ENCODE measurements at regions of chr1 and their contacts with region 1.

Region 1: GRCh38 chr1:9350013-9350908 is 57.6 kb downstream of the SPSB1 start:
- DNase-seq: no peak
- H3K4me3 ChIP-seq: no peak overlapping the region
- H3K27ac ChIP-seq: no peak overlapping the region
- H3K4me1 ChIP-seq: peaks cover 20% of the 10 kb centered on the region
- H3K27me3 ChIP-seq: no peaks in the 10 kb centered on the region
- CTCF ChIP-seq: no peak

Region 2: GRCh38 chr1:9150582-9151327 is 199.5 kb before region 1 on chr1:
- CTCF ChIA-PET with region 1: no interaction called
- dilution Hi-C with region 1: no loop called
- in situ Hi-C with region 1: no loop called
- intact Hi-C with region 1: no loop called
- DNase-seq: no peak
- H3K4me3 ChIP-seq: no peak overlapping the region
- H3K27ac ChIP-seq: no peak overlapping the region
- H3K4me1 ChIP-seq: no peaks in the 10 kb centered on the region
- H3K27me3 ChIP-seq: no peaks in the 10 kb centered on the region
- CTCF ChIP-seq: no peak

Region 3: DNA sequence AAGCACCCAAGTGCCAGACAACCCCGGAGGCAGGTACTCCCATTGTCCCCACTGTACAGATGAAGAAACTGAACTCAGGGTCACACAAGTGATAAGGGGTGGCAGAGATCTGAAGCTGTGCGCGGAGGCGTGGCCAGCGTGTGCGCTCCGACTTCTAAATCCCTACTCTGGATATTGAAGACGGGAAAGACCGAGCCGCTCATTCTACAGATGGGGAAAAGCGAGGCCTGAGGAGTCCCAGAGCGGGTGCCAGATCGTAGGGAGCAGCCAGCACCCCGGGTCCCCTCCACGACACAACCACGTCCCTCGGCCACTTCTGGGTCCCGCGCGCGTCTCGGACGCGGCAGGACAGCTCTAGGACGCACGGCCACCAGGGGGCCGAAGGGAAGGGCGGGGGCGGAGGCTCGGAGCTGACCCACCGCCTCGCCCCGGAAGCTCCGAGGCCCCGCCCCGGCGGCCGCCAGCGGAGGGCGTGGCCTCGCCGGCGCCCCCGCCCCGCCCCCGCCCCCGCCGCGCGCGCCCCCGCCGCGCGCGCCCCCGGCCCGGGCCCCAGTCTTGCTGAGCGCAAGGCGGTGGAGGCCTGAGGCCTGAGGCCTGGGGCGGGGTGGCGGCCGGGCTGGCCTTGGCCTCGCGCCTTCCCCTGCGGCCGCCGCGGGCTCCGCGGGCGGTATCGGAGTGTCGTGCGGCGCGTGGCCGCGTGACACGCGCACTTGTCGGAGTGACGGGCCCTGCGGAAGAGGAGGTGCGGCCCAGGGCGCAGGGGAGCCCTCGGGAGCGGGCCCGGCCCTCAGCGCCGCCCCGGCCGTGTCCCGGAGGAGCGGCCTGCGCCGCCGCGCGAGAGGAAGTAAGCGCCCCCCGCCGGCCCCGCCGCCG is 115.8 kb before region 1 on chr1 and contains the start of gene H6PD:
- CTCF ChIA-PET with region 1: no interaction called
- dilution Hi-C with region 1: no loop called
- in situ Hi-C with region 1: no loop called
- intact Hi-C with region 1: no loop called
- DNase-seq: peak; percentile 74
- H3K4me3 ChIP-seq: peak within 1 kb of the TSS; percentile 52 to 66 (median 65)
- H3K27ac ChIP-seq: peak within 1 kb of the TSS; percentile 64
- H3K4me1 ChIP-seq: peaks cover 29% of the 10 kb centered on the region
- H3K27me3 ChIP-seq: no peaks in the 10 kb centered on the region
- CTCF ChIP-seq: peak; percentile 37 to 75
- total RNA-seq, gene H6PD: 12.6 to 18.0 TPM

Region 4: DNA sequence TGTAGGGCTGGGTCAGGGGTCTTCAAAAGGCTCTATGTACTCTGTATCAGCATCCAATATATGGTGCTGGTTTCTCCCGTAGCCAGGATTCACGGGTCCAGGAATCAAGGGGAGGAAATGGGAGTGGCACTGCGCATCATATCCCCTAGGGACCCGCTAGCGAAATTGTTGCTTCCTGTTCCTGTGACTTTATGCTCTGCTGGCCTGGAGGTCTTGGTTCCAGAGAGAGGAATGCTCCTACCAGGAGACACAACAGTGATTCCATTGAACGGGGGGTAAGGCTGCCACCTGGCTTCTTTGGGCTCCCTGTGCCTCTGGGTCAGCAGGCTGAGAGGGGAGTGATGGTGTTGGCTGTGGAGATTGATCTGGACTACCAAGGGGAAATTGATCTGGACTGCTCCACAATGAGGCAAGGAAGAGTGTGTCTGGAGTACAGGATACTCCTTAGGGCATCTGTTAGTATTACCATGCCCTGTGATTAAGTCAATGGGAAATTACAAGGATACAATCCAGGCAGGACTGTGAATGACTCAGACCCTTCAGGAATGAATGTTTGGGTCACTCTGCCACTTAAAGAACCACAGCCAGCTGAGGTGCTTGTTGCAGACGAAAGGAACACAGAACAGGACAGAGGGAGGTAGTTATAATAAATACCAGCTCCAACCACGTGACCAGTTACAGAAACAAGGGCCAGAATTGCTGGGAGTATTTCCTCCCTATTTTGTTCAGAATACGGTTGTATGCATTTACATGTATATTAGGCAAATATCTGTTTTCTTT is 47.3 kb before region 1 on chr1:
- CTCF ChIA-PET with region 1: no interaction called
- dilution Hi-C with region 1: loop called (anchors 10 kb)
- in situ Hi-C with region 1: no loop called
- intact Hi-C with region 1: no loop called
- DNase-seq: peak; percentile 93
- H3K4me3 ChIP-seq: no peak overlapping the region
- H3K27ac ChIP-seq: peak overlapping the region; percentile 66
- H3K4me1 ChIP-seq: peaks cover 38% of the 10 kb centered on the region
- H3K27me3 ChIP-seq: no peaks in the 10 kb centered on the region
- CTCF ChIP-seq: no peak

Region 5: GRCh38 chr1:9315411-9316079 is 34.7 kb before region 1 on chr1:
- CTCF ChIA-PET with region 1: no interaction called
- dilution Hi-C with region 1: no loop called
- in situ Hi-C with region 1: no loop called
- intact Hi-C with region 1: no loop called
- DNase-seq: peak; percentile 52
- H3K4me3 ChIP-seq: no peak overlapping the region
- H3K27ac ChIP-seq: no peak overlapping the region
- H3K4me1 ChIP-seq: peaks cover 3% of the 10 kb centered on the region
- H3K27me3 ChIP-seq: no peaks in the 10 kb centered on the region
- CTCF ChIP-seq: no peak

Region 6: DNA sequence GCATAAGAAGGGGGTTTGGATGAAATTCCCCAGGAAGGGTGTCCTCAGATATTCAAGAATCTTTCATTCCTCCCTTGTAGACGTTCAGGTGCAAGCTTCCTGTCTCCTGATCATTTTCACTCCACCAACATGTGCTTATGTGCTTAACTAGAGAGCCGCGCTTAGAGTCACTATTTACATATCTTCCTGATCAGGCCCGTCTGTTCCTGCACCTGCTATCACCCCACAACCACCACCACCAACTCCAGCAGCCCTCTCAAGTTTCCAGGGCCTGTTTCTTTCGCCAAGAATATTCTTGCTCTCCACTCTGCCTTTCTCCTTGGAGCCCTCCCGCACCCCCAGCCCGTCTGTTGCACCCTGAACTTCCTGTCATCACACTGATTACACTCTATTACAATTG is 55.9 kb after region 1 on chr1:
- CTCF ChIA-PET with region 1: no interaction called
- dilution Hi-C with region 1: loop called (anchors 5 kb)
- in situ Hi-C with region 1: no loop called
- intact Hi-C with region 1: no loop called
- DNase-seq: no peak
- H3K4me3 ChIP-seq: no peak overlapping the region
- H3K27ac ChIP-seq: no peak overlapping the region
- H3K4me1 ChIP-seq: no peaks in the 10 kb centered on the region
- H3K27me3 ChIP-seq: no peaks in the 10 kb centered on the region
- CTCF ChIP-seq: no peak

Region 7: DNA sequence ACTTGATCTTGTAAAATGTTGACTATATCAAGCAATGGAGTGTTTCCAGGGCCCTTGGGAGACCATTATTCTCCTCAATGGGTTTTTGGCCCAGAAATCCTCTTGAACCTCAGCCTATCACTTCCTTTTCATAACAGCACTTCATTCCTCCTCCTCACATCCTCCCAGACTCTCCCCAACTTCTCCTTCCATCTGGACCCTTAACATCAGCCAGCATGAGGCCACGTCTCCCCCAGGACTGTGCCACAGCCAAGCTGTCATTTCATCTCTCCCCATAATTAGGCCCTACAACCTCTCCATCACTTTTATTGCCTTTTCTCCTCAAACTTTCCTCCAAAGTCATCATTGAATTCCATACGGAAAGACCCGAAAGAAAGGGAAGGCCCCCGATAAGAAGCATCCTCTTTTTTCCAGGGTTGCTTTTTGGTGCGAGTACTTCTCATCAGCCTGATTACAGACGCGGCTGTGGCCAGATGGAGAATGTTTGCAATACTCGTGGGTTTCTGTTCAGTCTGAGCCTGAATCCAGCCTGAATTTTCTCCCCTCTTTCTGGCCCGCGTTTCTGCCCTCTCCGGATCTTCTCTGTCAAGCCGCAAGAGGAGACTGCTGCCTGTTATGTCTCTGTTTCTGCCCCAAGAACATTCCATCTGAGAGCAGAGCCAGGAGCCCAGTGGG is 136.3 kb after region 1 on chr1:
- CTCF ChIA-PET with region 1: no interaction called
- dilution Hi-C with region 1: no loop called
- in situ Hi-C with region 1: no loop called
- intact Hi-C with region 1: no loop called
- DNase-seq: no peak
- H3K4me3 ChIP-seq: no peak overlapping the region
- H3K27ac ChIP-seq: no peak overlapping the region
- H3K4me1 ChIP-seq: no peaks in the 10 kb centered on the region
- H3K27me3 ChIP-seq: no peaks in the 10 kb centered on the region
- CTCF ChIP-seq: no peak